Activated T-helper 2 cell treated with anti-CD3 and anti-CD28 coated beads, Interferon-gamma antibody, Interleukin-2, Interleukin-4, amounts not matched to agents 10 μg/mL and 5 μg/mL and 100 μg/mL, durations not matched to agents 14 hours and 24 hours and 36 hours (primary cell): ENCODE measurements at regions of chr11 and their contacts with region 1.

Region 1: GRCh38 chr11:18383388-18384156 is 10.8 kb upstream of the LDHA start:
- DNase-seq: peak; percentile 63
- H3K4me3 Mint-ChIP-seq: peak overlapping the region; percentile 75
- H3K27ac Mint-ChIP-seq: peak overlapping the region; percentile 100
- H3K4me1 Mint-ChIP-seq: peaks cover 35% of the 10 kb centered on the region
- H3K27me3 Mint-ChIP-seq: no peaks in the 10 kb centered on the region

Region 2: DNA sequence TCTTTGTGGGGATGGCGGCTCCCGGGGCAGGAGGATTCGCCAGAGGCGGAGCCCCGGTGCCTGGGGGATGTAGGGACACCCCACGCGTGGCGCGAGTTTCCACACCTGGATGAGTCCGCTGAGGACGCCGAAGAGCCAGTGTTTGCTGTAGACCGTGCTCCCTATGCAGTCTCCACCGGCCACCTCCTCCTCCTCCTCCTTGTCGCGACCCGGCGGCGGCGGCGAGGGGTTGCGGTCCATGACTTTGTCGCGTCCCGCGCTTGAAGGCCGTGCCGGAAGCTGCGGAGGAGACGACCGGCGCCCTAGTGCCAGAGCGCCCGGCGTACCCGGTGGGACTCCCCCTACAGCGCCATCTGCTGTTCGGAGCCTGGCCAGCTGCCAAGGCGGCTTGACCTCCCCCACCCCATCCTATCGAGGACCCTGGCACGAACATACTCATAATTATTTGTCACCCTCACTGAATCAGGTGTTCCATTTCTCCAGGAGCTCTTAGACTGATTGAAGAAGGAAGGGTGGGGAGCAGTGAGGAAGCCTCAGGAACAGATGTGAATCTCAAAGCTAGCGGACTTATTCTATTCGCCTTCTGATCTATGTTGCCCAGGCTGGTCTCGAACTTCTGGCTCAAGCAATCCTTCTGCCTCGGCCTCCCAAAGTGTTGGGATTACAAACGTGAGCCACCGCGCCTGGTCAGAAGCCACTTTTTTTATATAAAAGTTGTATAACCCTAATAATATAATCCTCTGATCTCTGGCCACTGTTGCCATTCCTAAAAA is 277.6 kb before region 1 on chr11 and contains the start of gene SAAL1:
- intact Hi-C with region 1: loop called (anchors 5 kb)
- DNase-seq: peak; percentile 86
- H3K4me3 Mint-ChIP-seq: peak within 1 kb of the TSS; percentile 90
- H3K27ac Mint-ChIP-seq: peak within 1 kb of the TSS; percentile 86
- H3K4me1 Mint-ChIP-seq: peaks cover 29% of the 10 kb centered on the region
- H3K27me3 Mint-ChIP-seq: peaks cover 5% of the 10 kb centered on the region
- total RNA-seq, gene SAAL1: 37.8 and 44.1 TPM in 2 replicates

Region 3: DNA sequence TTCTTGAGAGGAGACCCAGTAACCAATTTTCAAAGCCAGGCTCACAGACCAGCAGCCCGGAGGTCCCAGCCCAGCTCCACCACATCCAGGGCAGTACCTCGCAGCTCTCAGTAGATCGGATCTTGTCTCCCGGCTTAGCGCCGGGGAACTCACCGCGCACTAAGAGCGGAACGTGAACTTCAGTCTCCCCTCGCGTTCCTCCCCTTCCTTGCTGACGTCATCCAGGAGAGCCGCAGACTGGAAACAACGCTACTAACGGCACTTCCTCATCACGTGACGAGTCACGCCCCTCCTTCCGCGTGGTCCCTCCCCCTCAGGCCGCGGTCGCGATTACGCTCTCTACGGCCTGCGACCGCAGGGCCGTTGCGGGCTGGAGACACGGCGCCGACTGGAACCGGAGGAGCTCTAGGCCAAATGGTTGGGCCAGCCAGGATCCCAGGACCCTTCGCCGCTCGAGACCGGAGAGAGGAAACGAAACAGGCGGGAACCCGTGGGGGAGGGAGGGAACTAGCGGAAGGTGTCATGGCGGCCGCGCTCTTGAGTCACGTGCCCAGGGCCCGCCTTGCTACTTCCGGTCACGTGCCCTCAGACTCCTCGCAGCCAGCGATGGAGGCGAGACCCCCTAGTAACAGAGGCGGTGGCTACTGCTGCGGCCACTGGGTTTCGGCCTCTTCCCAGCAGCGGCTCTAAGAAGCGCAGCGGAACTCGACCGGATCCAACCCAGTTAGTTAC is 61.4 kb before region 1 on chr11 and contains the starts of genes GTF2H1 and HPS5:
- intact Hi-C with region 1: loop called (anchors 1 kb)
- DNase-seq: peak; percentile 93
- H3K4me3 Mint-ChIP-seq: peak within 1 kb of the TSS; percentile 92
- H3K27ac Mint-ChIP-seq: peak within 1 kb of the TSS; percentile 98
- H3K4me1 Mint-ChIP-seq: peaks cover 57% of the 10 kb centered on the region
- H3K27me3 Mint-ChIP-seq: no peaks in the 10 kb centered on the region
- total RNA-seq, gene GTF2H1: 51.4 and 54.3 TPM in 2 replicates
- total RNA-seq, gene HPS5: 33.3 and 34.2 TPM in 2 replicates

Region 4: DNA sequence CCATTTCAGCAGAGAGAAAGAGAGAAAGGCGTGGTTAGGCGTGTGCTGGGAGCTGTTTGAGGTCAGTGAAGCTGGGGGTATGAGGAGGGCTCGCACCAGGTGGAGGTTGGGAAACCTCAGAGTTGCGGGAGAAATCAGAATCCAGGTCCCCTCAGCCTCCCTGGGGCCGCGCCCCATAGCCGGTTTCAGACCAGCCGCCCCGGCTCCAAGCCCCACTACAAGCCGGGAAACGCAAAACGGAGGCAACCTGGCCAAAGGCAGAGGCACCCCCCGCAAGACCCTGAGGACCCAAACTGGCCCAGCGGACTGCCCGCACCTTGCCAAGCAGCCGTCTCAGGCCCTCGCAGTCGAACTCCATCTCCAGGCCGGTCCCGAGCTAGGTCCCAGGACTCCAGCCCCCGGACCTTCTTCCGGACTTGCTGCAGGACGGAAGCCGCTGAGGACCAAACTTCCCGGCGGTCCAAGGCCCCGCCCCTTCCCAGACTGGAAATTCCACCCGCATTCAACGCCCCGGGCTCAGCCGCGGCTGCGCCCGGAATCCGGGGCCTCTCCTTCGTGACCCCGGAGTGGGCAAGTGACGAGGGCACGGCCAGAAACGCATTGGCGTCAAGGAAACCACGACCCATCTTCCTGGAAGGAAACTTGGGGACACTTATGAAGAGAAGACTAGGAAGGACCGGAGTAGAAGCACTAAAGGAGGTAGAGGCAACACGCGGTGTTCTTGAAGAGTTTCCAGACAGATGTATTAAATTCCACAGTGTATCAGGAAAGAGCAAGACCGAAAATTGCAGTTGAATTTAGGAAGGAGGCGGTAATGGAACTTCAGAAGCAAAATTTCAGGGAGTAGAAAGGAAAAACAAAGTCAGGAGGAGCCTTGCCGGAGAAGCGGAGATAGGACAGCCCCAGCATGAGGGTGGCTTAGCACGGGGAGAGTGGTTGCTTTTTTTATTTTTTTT is 205.0 kb after region 1 on chr11 and contains the start of gene UEVLD:
- intact Hi-C with region 1: loop called (anchors 1 kb)
- DNase-seq: peak; percentile 62
- H3K4me3 Mint-ChIP-seq: no peak within 1 kb of the TSS
- H3K27ac Mint-ChIP-seq: no peak within 1 kb of the TSS
- H3K4me1 Mint-ChIP-seq: peaks cover 9% of the 10 kb centered on the region
- H3K27me3 Mint-ChIP-seq: no peaks in the 10 kb centered on the region
- total RNA-seq, gene UEVLD: 26.4 and 32.7 TPM in 2 replicates